ENCODE measurements at regions of chr5 and their contacts with region 1.

Region 1: GRCh38 chr5:95261437-95262175 is 23.3 kb downstream of the MCTP1 start:
- DNase-seq: peak in 1 of 2 experiments; percentile 17
- H3K4me3 ChIP-seq: no peak overlapping the region
- H3K27ac ChIP-seq: no peak overlapping the region
- H3K4me1 ChIP-seq: no peaks in the 10 kb centered on the region
- H3K27me3 ChIP-seq: no peaks in the 10 kb centered on the region
- CTCF ChIP-seq: peak; percentile 72

Region 2: DNA sequence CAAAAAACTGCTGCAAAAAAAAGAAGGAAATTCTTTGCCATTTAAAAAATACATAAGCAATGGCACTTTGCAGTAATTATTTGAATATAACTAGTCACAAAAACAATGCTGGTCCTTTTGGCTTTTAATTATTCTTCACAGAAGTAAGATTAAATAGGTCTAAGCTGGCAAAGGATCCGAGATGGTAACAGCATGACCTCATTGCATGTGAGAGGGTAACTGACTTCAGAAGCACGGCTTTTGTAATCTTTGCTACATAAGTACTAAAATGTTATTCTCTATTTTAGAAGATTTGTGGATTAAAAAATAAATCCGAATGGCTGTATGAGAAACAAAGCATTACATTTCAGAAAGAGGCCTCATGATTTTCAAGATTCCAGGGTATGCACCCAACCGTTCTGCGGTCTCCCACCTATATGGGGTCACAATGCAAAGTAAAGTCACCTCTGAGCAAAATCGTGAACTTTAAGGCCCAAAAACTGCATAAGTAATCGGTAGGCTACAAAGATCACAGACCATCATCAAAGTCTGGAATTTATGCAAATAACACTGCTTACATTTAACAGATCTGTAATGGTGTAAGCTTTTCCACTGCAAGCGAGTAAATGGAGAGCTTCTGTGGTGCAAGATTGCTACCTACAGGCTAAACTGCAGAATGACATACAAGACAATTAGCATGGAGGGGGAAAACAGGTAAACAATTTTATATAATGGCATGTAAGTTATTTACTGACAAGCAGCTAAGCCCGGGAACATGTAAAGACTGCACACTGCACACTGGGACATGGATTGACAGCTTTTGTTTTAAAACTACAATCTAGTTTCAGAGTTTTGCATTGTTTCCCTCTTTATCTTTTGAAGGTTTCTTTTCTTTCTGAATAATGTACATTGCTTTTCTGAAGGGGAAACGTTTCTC is 411.5 kb before region 1 on chr5:
- CTCF ChIA-PET with region 1: no interaction called
- POLR2A ChIA-PET with region 1: no interaction called
- intact Hi-C with region 1: no loop called
- DNase-seq: peak; percentile 12 to 51
- H3K4me3 ChIP-seq: no peak overlapping the region
- H3K27ac ChIP-seq: no peak overlapping the region
- H3K4me1 ChIP-seq: no peaks in the 10 kb centered on the region
- H3K27me3 ChIP-seq: no peaks in the 10 kb centered on the region
- CTCF ChIP-seq: peak; percentile 78

Region 3: GRCh38 chr5:94968507-94969095 is 293.0 kb before region 1 on chr5:
- CTCF ChIA-PET with region 1: interaction called, 4 read pairs
- POLR2A ChIA-PET with region 1: no interaction called
- intact Hi-C with region 1: loop called (anchors 1 kb)
- DNase-seq: peak; percentile 5 to 66
- H3K4me3 ChIP-seq: no peak overlapping the region
- H3K27ac ChIP-seq: no peak overlapping the region
- H3K4me1 ChIP-seq: no peaks in the 10 kb centered on the region
- H3K27me3 ChIP-seq: no peaks in the 10 kb centered on the region
- CTCF ChIP-seq: peak; percentile 78

Region 4: GRCh38 chr5:95369771-95370170 is 108.2 kb after region 1 on chr5:
- CTCF ChIA-PET with region 1: no interaction called
- POLR2A ChIA-PET with region 1: no interaction called
- intact Hi-C with region 1: no loop called
- DNase-seq: no peak
- H3K4me3 ChIP-seq: no peak overlapping the region
- H3K27ac ChIP-seq: no peak overlapping the region
- H3K4me1 ChIP-seq: no peaks in the 10 kb centered on the region
- H3K27me3 ChIP-seq: no peaks in the 10 kb centered on the region
- CTCF ChIP-seq: no peak